ENCODE measurements at regions of chr19 and their contacts with region 1.

Region 1: GRCh38 chr19:17932485-17933338 is at the start of gene CCDC124:
- DNase-seq: peak; percentile 97
- ATAC-seq: peak; percentile 95
- H3K4me3 ChIP-seq: peak within 1 kb of the TSS; percentile 72 to 88 (median 79)
- H3K4me3 Mint-ChIP-seq: peak within 1 kb of the TSS; percentile 96
- H3K27ac ChIP-seq: peak within 1 kb of the TSS; percentile 93 to 96
- H3K27ac Mint-ChIP-seq: peak within 1 kb of the TSS; percentile 97
- H3K4me1 ChIP-seq: peaks cover 11 to 19% of the 10 kb centered on the region in 2 donors
- H3K4me1 Mint-ChIP-seq: peaks cover 22% of the 10 kb centered on the region
- H3K27me3 ChIP-seq: no peaks in the 10 kb centered on the region
- H3K27me3 Mint-ChIP-seq: no peaks in the 10 kb centered on the region
- CTCF ChIP-seq: peak; percentile 90
- total RNA-seq, gene CCDC124: 25.0 and 26.9 TPM in 2 replicates

Region 2: GRCh38 chr19:17873786-17874757 is 58.6 kb before region 1 on chr19:
- CTCF ChIA-PET with region 1: interaction called, 16 read pairs
- POLR2A ChIA-PET with region 1: interaction called, 3 read pairs
- intact Hi-C with region 1: loop called (anchors 2 kb)
- DNase-seq: peak; percentile 84
- ATAC-seq: peak; percentile 81
- H3K4me3 ChIP-seq: peak overlapping the region in 4 of 5 experiments; percentile 38 to 53 (median 46)
- H3K4me3 Mint-ChIP-seq: peak overlapping the region; percentile 74
- H3K27ac ChIP-seq: no peak overlapping the region
- H3K27ac Mint-ChIP-seq: no peak overlapping the region
- H3K4me1 ChIP-seq: peaks cover 25 to 31% of the 10 kb centered on the region in 2 donors
- H3K4me1 Mint-ChIP-seq: peaks cover 20% of the 10 kb centered on the region
- H3K27me3 ChIP-seq: peaks cover 0 to 33% (median 15%) of the 10 kb centered on the region in 4 experiments
- H3K27me3 Mint-ChIP-seq: peaks cover 5% of the 10 kb centered on the region
- CTCF ChIP-seq: no peak

Region 3: DNA sequence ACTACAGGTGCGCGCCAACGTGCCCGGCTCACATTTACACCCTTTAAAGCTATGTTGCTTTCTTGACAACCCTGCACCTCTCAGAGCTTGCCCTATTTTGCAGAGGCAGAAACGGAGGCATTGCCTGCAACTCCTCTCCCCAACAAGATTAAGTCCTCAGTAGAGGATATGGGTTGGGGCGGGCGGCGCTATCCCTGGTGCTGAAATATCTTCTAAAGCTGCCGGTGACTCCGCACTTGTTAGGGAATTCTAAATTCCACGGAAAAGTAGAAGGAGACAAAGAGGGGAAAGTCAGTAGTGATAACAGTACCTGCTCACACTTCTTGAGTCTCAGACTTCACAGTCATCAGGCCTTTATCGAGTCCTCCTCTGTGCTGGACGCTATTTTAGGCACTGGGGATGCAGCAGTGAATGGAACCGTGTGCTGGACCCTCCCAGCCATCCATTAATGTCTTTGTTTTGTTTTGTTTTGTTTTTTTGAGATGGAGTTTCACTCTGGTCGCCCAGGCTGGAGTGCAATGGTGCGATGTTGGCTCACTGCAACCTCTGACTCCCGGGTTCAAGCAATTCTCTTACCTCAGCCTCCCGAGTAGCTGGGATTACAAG is 43.0 kb before region 1 on chr19:
- CTCF ChIA-PET with region 1: no interaction called
- POLR2A ChIA-PET with region 1: no interaction called
- intact Hi-C with region 1: no loop called
- DNase-seq: no peak
- ATAC-seq: no peak
- H3K4me3 ChIP-seq: no peak overlapping the region
- H3K4me3 Mint-ChIP-seq: no peak overlapping the region
- H3K27ac ChIP-seq: no peak overlapping the region
- H3K27ac Mint-ChIP-seq: peak overlapping the region; percentile 10
- H3K4me1 ChIP-seq: peaks cover 22% of the 10 kb centered on the region in 2 donors
- H3K4me1 Mint-ChIP-seq: peaks cover 15% of the 10 kb centered on the region
- H3K27me3 ChIP-seq: no peaks in the 10 kb centered on the region
- H3K27me3 Mint-ChIP-seq: peaks cover 4% of the 10 kb centered on the region
- CTCF ChIP-seq: no peak

Region 4: GRCh38 chr19:17947815-17948513 is 15.3 kb after region 1 on chr19:
- CTCF ChIA-PET with region 1: interaction called, 51 read pairs
- POLR2A ChIA-PET with region 1: interaction called, 8 read pairs
- intact Hi-C with region 1: no loop called
- DNase-seq: peak; percentile 97
- ATAC-seq: peak; percentile 64
- H3K4me3 ChIP-seq: peak overlapping the region in 4 of 5 experiments; percentile 46 to 63 (median 58)
- H3K4me3 Mint-ChIP-seq: peak overlapping the region; percentile 88
- H3K27ac ChIP-seq: peak overlapping the region; percentile 55 to 94
- H3K27ac Mint-ChIP-seq: peak overlapping the region; percentile 56
- H3K4me1 ChIP-seq: peaks cover 53 to 61% of the 10 kb centered on the region in 2 donors
- H3K4me1 Mint-ChIP-seq: peaks cover 53% of the 10 kb centered on the region
- H3K27me3 ChIP-seq: peaks cover 0 to 40% (median 27%) of the 10 kb centered on the region in 4 experiments
- H3K27me3 Mint-ChIP-seq: peaks cover 15% of the 10 kb centered on the region
- CTCF ChIP-seq: no peak